ENCODE measurements at regions of chr18 and their contacts with region 1.

Region 1: GRCh38 chr18:54269893-54270844 is 852 bp downstream of the POLI start:
- DNase-seq: peak; percentile 76
- H3K4me3 Mint-ChIP-seq: peak overlapping the region; percentile 81
- H3K27ac Mint-ChIP-seq: peak overlapping the region; percentile 89
- H3K4me1 Mint-ChIP-seq: peaks cover 39% of the 10 kb centered on the region
- H3K27me3 Mint-ChIP-seq: no peaks in the 10 kb centered on the region

Region 2: GRCh38 chr18:54284981-54285785 is 15.0 kb after region 1 on chr18:
- CTCF ChIA-PET with region 1: interaction called, 24 read pairs
- POLR2A ChIA-PET with region 1: interaction called, 28 read pairs
- DNase-seq: peak; percentile 79
- H3K4me3 Mint-ChIP-seq: no peak overlapping the region
- H3K27ac Mint-ChIP-seq: peak overlapping the region; percentile 80
- H3K4me1 Mint-ChIP-seq: peaks cover 24% of the 10 kb centered on the region
- H3K27me3 Mint-ChIP-seq: no peaks in the 10 kb centered on the region